Activated CD4-positive, alpha-beta T cell treated with anti-CD3 and anti-CD28 coated beads, Interleukin-2, amount 10 ng/mL, durations not matched to agents 24 days and 14 days (primary cell): ENCODE measurements at regions of chr7 and their contacts with region 1.

Region 1: DNA sequence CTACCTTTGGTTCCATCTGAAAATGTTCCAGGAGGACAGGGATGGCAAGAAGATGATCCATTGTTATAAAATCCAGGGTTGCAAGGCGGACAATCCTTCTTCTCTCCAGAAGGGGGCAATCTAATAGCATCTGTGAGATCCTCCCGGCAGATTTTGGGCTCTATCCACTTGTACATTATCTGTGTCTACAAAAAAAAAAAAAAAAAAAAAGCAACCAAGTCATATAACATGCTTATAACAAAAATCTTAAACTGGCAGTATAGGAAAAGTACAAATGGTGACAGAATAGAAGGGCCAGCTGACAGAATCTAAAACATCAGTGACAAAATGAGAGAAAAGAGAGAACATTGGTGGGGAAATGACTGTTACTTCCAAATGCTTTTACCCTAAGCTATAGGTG is 132.7 kb downstream of the ELAPOR2 start:
- DNase-seq: peak; percentile 73
- H3K4me3 Mint-ChIP-seq: no peak overlapping the region
- H3K27ac Mint-ChIP-seq: no peak overlapping the region
- H3K4me1 Mint-ChIP-seq: no peaks in the 10 kb centered on the region
- H3K27me3 Mint-ChIP-seq: peaks cover 15% of the 10 kb centered on the region

Region 2: DNA sequence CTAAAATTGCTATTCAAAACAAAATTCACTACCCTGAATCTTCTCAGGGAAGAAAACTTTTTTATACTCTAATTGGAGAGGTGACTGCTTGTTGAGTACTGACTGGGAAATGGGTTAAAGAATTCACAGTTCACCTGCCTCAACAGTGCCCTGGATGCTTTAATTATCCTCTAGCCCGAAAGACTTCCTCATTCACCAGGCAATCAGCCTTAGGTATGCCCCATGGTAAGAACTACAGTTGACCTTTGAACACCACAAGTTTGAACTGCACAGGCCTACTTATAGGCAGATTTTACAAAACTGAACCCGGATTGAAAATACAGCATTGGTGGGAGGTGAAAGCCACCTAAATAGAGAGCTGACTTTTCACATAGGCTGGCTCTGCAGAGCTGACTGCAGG is 42.6 kb before region 1 on chr7:
- intact Hi-C with region 1: no loop called
- DNase-seq: no peak
- H3K4me3 Mint-ChIP-seq: no peak overlapping the region
- H3K27ac Mint-ChIP-seq: no peak overlapping the region
- H3K4me1 Mint-ChIP-seq: no peaks in the 10 kb centered on the region
- H3K27me3 Mint-ChIP-seq: no peaks in the 10 kb centered on the region

Region 3: GRCh38 chr7:86914551-86914950 is 12.2 kb before region 1 on chr7:
- intact Hi-C with region 1: no loop called
- DNase-seq: no peak
- H3K4me3 Mint-ChIP-seq: no peak overlapping the region
- H3K27ac Mint-ChIP-seq: no peak overlapping the region
- H3K4me1 Mint-ChIP-seq: peaks cover 2% of the 10 kb centered on the region
- H3K27me3 Mint-ChIP-seq: no peaks in the 10 kb centered on the region

Region 4: GRCh38 chr7:87416682-87417587 is 490.2 kb after region 1 on chr7:
- intact Hi-C with region 1: loop called (anchors 5 kb)
- DNase-seq: peak; percentile 91
- H3K4me3 Mint-ChIP-seq: no peak overlapping the region
- H3K27ac Mint-ChIP-seq: no peak overlapping the region
- H3K4me1 Mint-ChIP-seq: no peaks in the 10 kb centered on the region
- H3K27me3 Mint-ChIP-seq: peaks cover 5% of the 10 kb centered on the region

Region 5: DNA sequence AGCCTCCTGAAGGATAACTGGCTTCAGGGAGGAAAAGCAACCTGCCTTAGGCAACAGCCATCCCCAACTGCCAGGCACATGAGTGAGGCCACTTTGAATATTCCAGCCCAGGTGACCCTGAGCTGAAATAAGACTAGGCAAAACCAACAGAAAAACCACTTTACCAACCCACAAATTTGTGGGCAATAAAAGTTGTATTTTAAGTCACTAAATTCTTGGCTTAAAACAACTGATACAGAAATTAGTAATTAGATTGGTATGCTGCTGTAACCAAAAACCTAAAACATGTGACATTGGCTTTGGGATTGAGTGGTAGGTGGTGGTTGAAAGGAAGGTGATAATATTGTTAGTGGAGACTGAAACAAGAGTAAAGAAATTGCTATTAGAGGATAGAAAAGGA is 508.8 kb after region 1 on chr7:
- intact Hi-C with region 1: no loop called
- DNase-seq: no peak
- H3K4me3 Mint-ChIP-seq: no peak overlapping the region
- H3K27ac Mint-ChIP-seq: no peak overlapping the region
- H3K4me1 Mint-ChIP-seq: no peaks in the 10 kb centered on the region
- H3K27me3 Mint-ChIP-seq: peaks cover 2% of the 10 kb centered on the region